Breast epithelium (tissue), 4 donors: ENCODE measurements at regions of chr10 and their contacts with region 1.

Region 1: GRCh38 chr10:130567436-130567835 is 431.2 kb downstream of the GLRX3 start:
- DNase-seq: no peak
- H3K4me3 ChIP-seq: no peak overlapping the region
- H3K27ac ChIP-seq: no peak overlapping the region
- H3K4me1 ChIP-seq: no peaks in the 10 kb centered on the region
- H3K27me3 ChIP-seq: peaks cover 0 to 36% of the 10 kb centered on the region in 2 donors
- CTCF ChIP-seq: no peak
- POLR2A ChIP-seq: no peak

Region 2: GRCh38 chr10:128833671-128834070 is 1733.8 kb before region 1 on chr10:
- intact Hi-C with region 1: no loop called
- DNase-seq: no peak
- H3K4me3 ChIP-seq: no peak overlapping the region
- H3K27ac ChIP-seq: no peak overlapping the region
- H3K4me1 ChIP-seq: no peaks in the 10 kb centered on the region
- H3K27me3 ChIP-seq: no peaks in the 10 kb centered on the region
- CTCF ChIP-seq: no peak
- POLR2A ChIP-seq: no peak

Region 3: GRCh38 chr10:130647341-130647740 is 79.9 kb after region 1 on chr10:
- intact Hi-C with region 1: loop called (anchors 2 kb)
- DNase-seq: no peak
- H3K4me3 ChIP-seq: no peak overlapping the region
- H3K27ac ChIP-seq: no peak overlapping the region
- H3K4me1 ChIP-seq: no peaks in the 10 kb centered on the region
- H3K27me3 ChIP-seq: peaks cover 0 to 6% of the 10 kb centered on the region in 2 donors
- CTCF ChIP-seq: no peak
- POLR2A ChIP-seq: no peak